Heart right ventricle (tissue), 16 donors: ENCODE measurements at regions of chr9 and their contacts with region 1.

Region 1: GRCh38 chr9:131848570-131849160 is 108.8 kb upstream of the RAPGEF1 start:
- DNase-seq: no peak
- ATAC-seq: no peak
- H3K4me3 ChIP-seq: no peak overlapping the region
- H3K27ac ChIP-seq: no peak overlapping the region
- H3K4me1 ChIP-seq: no peaks in the 10 kb centered on the region
- H3K27me3 ChIP-seq: no peaks in the 10 kb centered on the region
- CTCF ChIP-seq: no peak

Region 2: GRCh38 chr9:131868766-131869165 is 20.1 kb after region 1 on chr9:
- intact Hi-C with region 1: loop called in 1 of 10 experiments (anchors 1 kb)
- DNase-seq: no peak
- ATAC-seq: peak in 1 of 8 donors; percentile 14
- H3K4me3 ChIP-seq: no peak overlapping the region
- H3K27ac ChIP-seq: no peak overlapping the region
- H3K4me1 ChIP-seq: no peaks in the 10 kb centered on the region
- H3K27me3 ChIP-seq: no peaks in the 10 kb centered on the region
- CTCF ChIP-seq: no peak